ENCODE measurements at regions of chr12 and their contacts with region 1.

Region 1: GRCh38 chr12:46382964-46383653 is 10.5 kb upstream of the SLC38A2 start:
- DNase-seq: peak; percentile 97 to 98
- H3K4me3 ChIP-seq: peak overlapping the region; percentile 94
- H3K4me3 Mint-ChIP-seq: peak overlapping the region; percentile 77
- H3K27ac Mint-ChIP-seq: peak overlapping the region; percentile 99
- H3K4me1 ChIP-seq: peaks cover 47% of the 10 kb centered on the region
- H3K4me1 Mint-ChIP-seq: peaks cover 38% of the 10 kb centered on the region
- H3K27me3 ChIP-seq: no peaks in the 10 kb centered on the region
- H3K27me3 Mint-ChIP-seq: no peaks in the 10 kb centered on the region
- CTCF ChIP-seq: peak in 1 of 2 experiments; percentile 17

Region 2: DNA sequence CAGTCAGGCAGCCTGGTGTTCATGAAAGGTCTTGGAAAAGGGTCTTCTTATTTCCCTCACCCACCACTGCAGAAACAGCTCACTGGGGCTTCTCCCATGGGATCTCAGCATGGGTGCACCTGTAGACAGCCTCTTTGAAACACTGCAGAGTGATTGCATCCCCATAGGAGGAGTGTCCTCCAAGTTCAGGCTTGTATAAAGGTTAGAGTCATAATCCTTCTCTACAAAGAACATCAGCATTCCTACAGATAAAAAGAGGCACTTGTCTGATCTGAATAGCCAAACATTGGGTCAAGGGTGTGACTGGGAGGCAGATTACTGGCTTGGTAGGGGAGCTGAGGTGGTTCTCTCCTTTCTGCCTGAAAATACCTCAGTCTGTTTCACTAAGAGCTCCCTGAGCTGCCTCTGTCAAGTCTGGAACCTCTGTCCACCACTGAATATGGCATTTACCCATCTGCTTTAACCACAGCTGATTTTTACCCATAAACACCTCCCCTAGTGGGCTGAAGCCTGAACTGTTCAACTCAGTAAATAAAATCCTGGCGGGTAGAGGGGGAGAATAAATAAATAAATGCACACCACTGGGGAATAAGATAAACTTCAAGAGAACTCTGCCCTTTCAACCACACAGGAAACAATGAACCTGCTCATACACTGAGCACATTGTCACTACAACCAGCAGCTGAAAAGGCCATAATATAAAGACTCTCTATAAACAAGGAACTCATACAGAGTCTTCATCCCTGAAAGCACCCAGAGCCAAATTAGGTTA is 272.0 kb before region 1 on chr12:
- CTCF ChIA-PET with region 1: no interaction called
- POLR2A ChIA-PET with region 1: no interaction called
- intact Hi-C with region 1: no loop called
- DNase-seq: peak in 1 of 2 experiments; percentile 15
- H3K4me3 ChIP-seq: no peak overlapping the region
- H3K4me3 Mint-ChIP-seq: no peak overlapping the region
- H3K27ac Mint-ChIP-seq: no peak overlapping the region
- H3K4me1 ChIP-seq: no peaks in the 10 kb centered on the region
- H3K4me1 Mint-ChIP-seq: peaks cover 8% of the 10 kb centered on the region
- H3K27me3 ChIP-seq: no peaks in the 10 kb centered on the region
- H3K27me3 Mint-ChIP-seq: peaks cover 9% of the 10 kb centered on the region
- CTCF ChIP-seq: peak in 1 of 2 experiments; percentile 31

Region 3: GRCh38 chr12:46430340-46430948 is 47.3 kb after region 1 on chr12:
- CTCF ChIA-PET with region 1: no interaction called
- POLR2A ChIA-PET with region 1: no interaction called
- intact Hi-C with region 1: loop called (anchors 1 kb)
- DNase-seq: peak; percentile 45 to 69
- H3K4me3 ChIP-seq: no peak overlapping the region
- H3K4me3 Mint-ChIP-seq: no peak overlapping the region
- H3K27ac Mint-ChIP-seq: peak overlapping the region; percentile 92
- H3K4me1 ChIP-seq: peaks cover 20% of the 10 kb centered on the region
- H3K4me1 Mint-ChIP-seq: peaks cover 30% of the 10 kb centered on the region
- H3K27me3 ChIP-seq: no peaks in the 10 kb centered on the region
- H3K27me3 Mint-ChIP-seq: no peaks in the 10 kb centered on the region
- CTCF ChIP-seq: no peak

Measured in Caco-2 (cell line).